ENCODE measurements at regions of chr6 and their contacts with region 1.

Region 1: DNA sequence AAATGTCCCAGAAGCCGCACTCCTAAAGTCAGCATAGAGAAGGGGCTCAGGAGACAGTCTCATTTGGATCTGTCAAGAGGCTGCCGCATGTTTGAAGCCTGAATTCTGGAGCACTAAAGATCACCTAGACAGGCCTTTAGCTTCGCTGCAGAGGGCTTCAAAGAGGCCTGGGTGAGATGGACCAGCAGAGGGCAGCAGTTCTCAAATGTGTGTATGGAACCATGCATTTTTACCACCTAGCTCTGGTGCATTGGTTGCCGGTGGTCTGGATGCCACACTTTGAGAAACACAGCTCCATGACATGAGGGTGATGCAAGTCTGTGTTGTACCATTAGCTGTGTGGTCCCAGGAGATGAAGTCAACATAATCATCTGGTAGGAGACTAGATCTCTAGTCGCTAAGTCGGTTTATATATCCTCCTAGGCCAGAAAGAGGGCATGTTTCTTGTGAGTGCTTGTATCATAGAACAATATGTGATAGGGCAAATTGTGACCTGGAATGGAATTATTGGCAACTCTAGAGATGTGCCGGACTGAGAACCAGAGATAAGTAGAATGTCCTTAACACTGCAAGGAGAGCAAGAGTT is 64.8 kb downstream of the KIAA0319 start:
- DNase-seq: no peak
- ATAC-seq: peak; percentile 97
- H3K4me3 ChIP-seq: no peak overlapping the region
- H3K27ac ChIP-seq: no peak overlapping the region
- H3K4me1 ChIP-seq: no peaks in the 10 kb centered on the region
- H3K27me3 ChIP-seq: no peaks in the 10 kb centered on the region
- CTCF ChIP-seq: peak; percentile 79 to 89 (median 86)
- EP300 ChIP-seq: no peak
- POLR2A ChIP-seq: no peak
- RAD21 ChIP-seq: peak; percentile 73

Region 2: DNA sequence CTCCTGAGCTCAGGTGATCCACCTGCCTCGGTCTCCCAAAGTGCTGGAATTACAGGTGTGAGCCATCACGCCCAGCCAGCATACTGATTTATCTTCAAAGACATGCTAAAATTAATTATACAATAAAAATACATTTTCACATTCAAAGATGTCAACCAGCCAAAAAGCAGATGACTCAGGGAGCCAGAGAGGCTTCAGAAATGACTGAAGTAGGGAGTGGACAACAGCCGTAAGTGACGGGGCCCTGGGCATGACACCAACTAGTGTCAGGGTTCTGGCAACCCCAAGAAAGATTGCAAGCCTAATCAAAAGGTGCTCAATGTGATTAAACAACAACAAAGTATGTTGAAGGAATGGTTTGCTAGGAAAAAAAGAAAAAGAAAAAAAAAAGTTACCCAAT is 120.2 kb before region 1 on chr6:
- CTCF ChIA-PET with region 1: no interaction called
- POLR2A ChIA-PET with region 1: no interaction called
- RAD21 ChIA-PET with region 1: no interaction called
- SMC1A ChIA-PET with region 1: no interaction called
- in situ Hi-C with region 1: no loop called
- intact Hi-C with region 1: no loop called
- DNase-seq: no peak
- ATAC-seq: no peak
- H3K4me3 ChIP-seq: no peak overlapping the region
- H3K27ac ChIP-seq: no peak overlapping the region
- H3K4me1 ChIP-seq: no peaks in the 10 kb centered on the region
- H3K27me3 ChIP-seq: no peaks in the 10 kb centered on the region
- CTCF ChIP-seq: no peak
- EP300 ChIP-seq: no peak
- POLR2A ChIP-seq: no peak
- RAD21 ChIP-seq: no peak

Region 3: DNA sequence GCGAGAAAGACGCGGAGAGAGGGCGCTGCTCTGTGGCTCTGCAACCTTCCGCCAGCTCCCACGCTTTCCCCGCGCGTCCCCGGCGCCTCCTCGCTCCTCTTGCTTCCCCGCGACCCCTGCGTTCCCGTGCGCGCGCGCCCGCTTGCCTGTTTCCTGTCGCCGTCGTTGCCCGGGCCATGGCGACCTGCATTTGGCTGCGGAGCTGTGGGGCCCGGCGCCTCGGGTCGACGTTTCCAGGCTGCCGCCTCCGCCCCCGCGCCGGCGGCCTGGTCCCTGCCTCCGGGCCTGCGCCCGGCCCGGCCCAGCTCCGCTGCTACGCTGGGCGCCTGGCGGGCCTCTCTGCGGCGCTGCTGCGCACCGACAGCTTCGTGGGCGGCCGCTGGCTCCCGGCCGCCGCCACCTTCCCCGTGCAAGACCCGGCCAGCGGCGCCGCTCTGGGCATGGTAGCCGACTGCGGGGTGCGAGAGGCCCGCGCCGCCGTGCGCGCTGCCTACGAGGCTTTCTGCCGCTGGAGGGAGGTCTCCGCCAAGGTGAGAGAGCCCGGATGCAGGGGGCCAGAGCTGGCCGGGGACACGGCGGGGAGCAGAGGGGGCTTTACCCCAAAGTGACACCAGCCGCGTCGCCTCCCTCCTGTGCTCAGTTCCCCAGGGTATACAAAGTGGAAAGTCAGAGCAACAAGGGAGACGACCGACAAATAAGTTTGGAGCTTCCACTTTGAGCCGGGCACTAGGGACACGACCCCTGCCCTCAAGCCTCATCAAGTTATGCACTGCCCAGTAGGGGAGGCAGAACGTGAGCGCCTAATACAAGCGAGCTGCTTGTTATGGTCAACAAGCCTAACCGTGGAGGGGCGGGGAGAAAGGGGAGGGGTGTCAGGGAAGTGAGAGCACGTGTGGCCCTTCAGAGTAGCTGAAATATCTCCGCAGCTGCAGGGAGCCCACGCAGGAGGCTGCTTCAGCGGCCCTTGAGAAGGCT is 86.1 kb before region 1 on chr6 and contains the start of gene ALDH5A1:
- CTCF ChIA-PET with region 1: interaction called, 14 read pairs
- POLR2A ChIA-PET with region 1: no interaction called
- RAD21 ChIA-PET with region 1: interaction called, 15 read pairs
- SMC1A ChIA-PET with region 1: interaction called, 10 read pairs
- in situ Hi-C with region 1: no loop called
- intact Hi-C with region 1: no loop called
- DNase-seq: no peak
- ATAC-seq: peak; percentile 86
- H3K4me3 ChIP-seq: peak within 1 kb of the TSS; percentile 79
- H3K27ac ChIP-seq: peak within 1 kb of the TSS; percentile 33
- H3K4me1 ChIP-seq: peaks cover 3% of the 10 kb centered on the region; the same call in 1 of the 2 replicates
- H3K27me3 ChIP-seq: no peaks in the 10 kb centered on the region
- CTCF ChIP-seq: peak; percentile 30 to 57 (median 34); a peak in 5 of 6 replicates
- EP300 ChIP-seq: no peak
- POLR2A ChIP-seq: peak; percentile 71
- RAD21 ChIP-seq: peak; percentile 66
- polyA plus RNA-seq, gene ALDH5A1: 2.6 to 6.9 TPM

Region 4: DNA sequence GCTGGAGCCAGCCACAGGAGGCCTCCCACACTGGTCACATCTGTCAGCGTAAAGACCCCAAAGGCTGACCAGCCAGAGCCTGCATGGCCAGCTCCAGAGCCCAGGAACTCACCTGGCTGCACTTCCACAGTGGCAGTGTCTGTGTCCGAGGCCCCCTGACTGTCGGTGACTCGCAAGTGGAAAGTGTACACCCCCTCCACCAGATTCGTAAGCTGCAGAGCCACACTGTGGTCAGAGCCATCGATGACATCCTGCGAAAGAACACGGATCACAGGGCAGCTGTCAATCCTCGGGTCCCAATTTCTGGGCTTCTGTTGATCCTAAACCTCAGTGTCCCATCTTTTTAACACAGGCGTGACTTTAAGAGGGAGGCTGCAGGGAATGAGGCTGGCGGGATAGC is 17.1 kb before region 1 on chr6:
- CTCF ChIA-PET with region 1: interaction called, 11 read pairs
- POLR2A ChIA-PET with region 1: no interaction called
- RAD21 ChIA-PET with region 1: no interaction called
- SMC1A ChIA-PET with region 1: interaction called, 7 read pairs
- in situ Hi-C with region 1: no loop called
- intact Hi-C with region 1: no loop called
- DNase-seq: no peak
- ATAC-seq: no peak
- H3K4me3 ChIP-seq: no peak overlapping the region
- H3K27ac ChIP-seq: no peak overlapping the region
- H3K4me1 ChIP-seq: no peaks in the 10 kb centered on the region
- H3K27me3 ChIP-seq: no peaks in the 10 kb centered on the region
- CTCF ChIP-seq: no peak
- EP300 ChIP-seq: no peak
- POLR2A ChIP-seq: no peak
- RAD21 ChIP-seq: no peak

Region 5: DNA sequence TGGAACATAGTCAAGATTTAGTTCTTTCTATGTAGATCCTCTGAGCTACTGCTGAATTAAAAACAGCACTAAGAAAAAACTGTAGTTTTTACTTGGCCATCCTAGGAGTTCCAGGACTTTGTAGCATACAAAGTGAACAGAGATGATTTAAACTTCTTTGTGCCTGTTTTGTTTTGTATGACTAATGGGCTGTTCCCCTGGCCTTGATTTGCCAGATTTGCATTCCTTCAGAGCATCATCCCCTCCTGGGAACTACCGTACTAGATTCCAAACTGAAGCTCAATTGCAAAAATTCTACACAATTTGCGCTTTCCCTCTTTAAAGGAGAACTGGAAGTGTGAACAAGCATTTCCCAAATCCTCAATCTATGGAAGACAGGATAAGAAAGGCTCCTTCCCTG is 108.8 kb after region 1 on chr6:
- CTCF ChIA-PET with region 1: interaction called, 35 read pairs
- POLR2A ChIA-PET with region 1: no interaction called
- RAD21 ChIA-PET with region 1: interaction called, 4 read pairs
- SMC1A ChIA-PET with region 1: interaction called, 7 read pairs
- in situ Hi-C with region 1: loop called (anchors 5 kb)
- intact Hi-C with region 1: loop called (anchors 1 kb)
- DNase-seq: no peak
- ATAC-seq: no peak
- H3K4me3 ChIP-seq: no peak overlapping the region
- H3K27ac ChIP-seq: no peak overlapping the region
- H3K4me1 ChIP-seq: no peaks in the 10 kb centered on the region; the same call in 1 of the 2 replicates
- H3K27me3 ChIP-seq: no peaks in the 10 kb centered on the region
- CTCF ChIP-seq: no peak
- EP300 ChIP-seq: no peak
- POLR2A ChIP-seq: no peak
- RAD21 ChIP-seq: no peak

Region 6: DNA sequence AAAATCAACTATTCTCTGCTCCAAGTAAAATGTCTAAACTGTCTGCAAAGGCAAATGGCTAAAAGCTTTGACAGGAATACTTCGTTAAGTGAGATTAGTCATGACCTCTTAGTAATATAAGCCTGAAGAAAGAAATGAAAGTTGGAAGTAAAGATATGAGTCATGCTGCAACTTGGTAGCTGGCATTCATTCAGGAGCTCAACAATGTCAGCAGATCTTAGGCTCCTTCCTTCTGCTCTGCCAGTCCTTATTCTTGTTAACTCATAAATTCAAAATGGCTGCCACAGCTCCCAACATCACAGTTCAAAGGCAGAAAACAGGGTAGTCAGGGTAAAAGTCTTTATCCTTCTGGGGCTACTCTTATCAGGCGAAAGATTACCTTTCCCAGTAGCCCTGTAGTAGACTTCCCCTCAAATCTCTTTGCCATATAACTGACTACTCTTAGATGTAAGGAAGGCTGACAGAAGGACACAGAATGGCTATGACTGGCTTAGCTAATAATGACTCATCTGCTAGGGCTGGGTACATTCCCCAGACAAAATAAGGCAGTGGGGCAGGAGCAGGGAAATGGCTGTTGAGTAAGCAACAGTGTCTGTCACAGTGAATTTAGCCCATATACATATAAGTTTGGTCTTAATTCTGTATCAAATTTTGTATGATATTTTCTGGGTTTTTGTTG is 162.2 kb after region 1 on chr6:
- CTCF ChIA-PET with region 1: interaction called, 10 read pairs
- POLR2A ChIA-PET with region 1: no interaction called
- RAD21 ChIA-PET with region 1: interaction called, 6 read pairs
- SMC1A ChIA-PET with region 1: no interaction called
- in situ Hi-C with region 1: no loop called
- intact Hi-C with region 1: no loop called
- DNase-seq: peak; percentile 81
- ATAC-seq: peak; percentile 95
- H3K4me3 ChIP-seq: peak overlapping the region; percentile 16; the same call in 1 of the 2 replicates
- H3K27ac ChIP-seq: peak overlapping the region; percentile 71
- H3K4me1 ChIP-seq: peaks cover 17% of the 10 kb centered on the region
- H3K27me3 ChIP-seq: no peaks in the 10 kb centered on the region
- CTCF ChIP-seq: no peak
- EP300 ChIP-seq: peak in 1 of 2 experiments; percentile 53; a peak in 1 of 4 replicates
- POLR2A ChIP-seq: no peak
- RAD21 ChIP-seq: no peak

Region 7: GRCh38 chr6:25070547-25071366 is 489.6 kb after region 1 on chr6:
- CTCF ChIA-PET with region 1: interaction called, 12 read pairs
- POLR2A ChIA-PET with region 1: no interaction called
- RAD21 ChIA-PET with region 1: interaction called, 5 read pairs
- SMC1A ChIA-PET with region 1: interaction called, 3 read pairs
- in situ Hi-C with region 1: no loop called
- intact Hi-C with region 1: loop called (anchors 2 kb)
- DNase-seq: peak; percentile 65
- ATAC-seq: peak; percentile 96
- H3K4me3 ChIP-seq: peak overlapping the region; percentile 70
- H3K27ac ChIP-seq: no peak overlapping the region
- H3K4me1 ChIP-seq: no peaks in the 10 kb centered on the region
- H3K27me3 ChIP-seq: no peaks in the 10 kb centered on the region
- CTCF ChIP-seq: peak; percentile 85 to 90 (median 88)
- EP300 ChIP-seq: no peak
- POLR2A ChIP-seq: no peak
- RAD21 ChIP-seq: peak; percentile 97

Region 8: GRCh38 chr6:25342802-25343201 is 761.6 kb after region 1 on chr6:
- CTCF ChIA-PET with region 1: no interaction called
- POLR2A ChIA-PET with region 1: no interaction called
- RAD21 ChIA-PET with region 1: no interaction called
- SMC1A ChIA-PET with region 1: no interaction called
- in situ Hi-C with region 1: no loop called
- intact Hi-C with region 1: no loop called
- DNase-seq: no peak
- ATAC-seq: no peak
- H3K4me3 ChIP-seq: no peak overlapping the region
- H3K27ac ChIP-seq: no peak overlapping the region
- H3K4me1 ChIP-seq: peaks cover 9% of the 10 kb centered on the region
- H3K27me3 ChIP-seq: 0 out of 4 replicates have a peak, but pooled peaks cover 0 to 2% of the 10 kb centered on the region in 2 experiments
- CTCF ChIP-seq: no peak
- EP300 ChIP-seq: no peak
- POLR2A ChIP-seq: no peak
- RAD21 ChIP-seq: no peak

Measured in GM12878 (cell line).